CD8-positive, alpha-beta T cell (primary cell): ENCODE measurements at regions of chr6 and their contacts with region 1.

Region 1: GRCh38 chr6:47787620-47788497 is 6.0 kb downstream of the OPN5 start:
- DNase-seq: peak; percentile 6 to 64 (median 42)
- ATAC-seq: peak; percentile 83
- H3K4me3 ChIP-seq: no peak overlapping the region
- H3K4me3 Mint-ChIP-seq: no peak overlapping the region
- H3K27ac ChIP-seq: no peak overlapping the region
- H3K27ac Mint-ChIP-seq: no peak overlapping the region
- H3K4me1 ChIP-seq: peaks cover 3% of the 10 kb centered on the region
- H3K4me1 Mint-ChIP-seq: peaks cover 6% of the 10 kb centered on the region
- H3K27me3 ChIP-seq: peaks cover 0 to 8% of the 10 kb centered on the region in 2 experiments
- H3K27me3 Mint-ChIP-seq: peaks cover 34% of the 10 kb centered on the region
- CTCF ChIP-seq: peak; percentile 91

Region 2: GRCh38 chr6:47680051-47680450 is 107.8 kb before region 1 on chr6:
- CTCF ChIA-PET with region 1: no interaction called
- POLR2A ChIA-PET with region 1: no interaction called
- intact Hi-C with region 1: no loop called
- DNase-seq: no peak
- ATAC-seq: no peak
- H3K4me3 ChIP-seq: no peak overlapping the region
- H3K4me3 Mint-ChIP-seq: no peak overlapping the region
- H3K27ac ChIP-seq: no peak overlapping the region
- H3K27ac Mint-ChIP-seq: no peak overlapping the region
- H3K4me1 ChIP-seq: no peaks in the 10 kb centered on the region
- H3K4me1 Mint-ChIP-seq: no peaks in the 10 kb centered on the region
- H3K27me3 ChIP-seq: no peaks in the 10 kb centered on the region
- H3K27me3 Mint-ChIP-seq: no peaks in the 10 kb centered on the region
- CTCF ChIP-seq: no peak

Region 3: DNA sequence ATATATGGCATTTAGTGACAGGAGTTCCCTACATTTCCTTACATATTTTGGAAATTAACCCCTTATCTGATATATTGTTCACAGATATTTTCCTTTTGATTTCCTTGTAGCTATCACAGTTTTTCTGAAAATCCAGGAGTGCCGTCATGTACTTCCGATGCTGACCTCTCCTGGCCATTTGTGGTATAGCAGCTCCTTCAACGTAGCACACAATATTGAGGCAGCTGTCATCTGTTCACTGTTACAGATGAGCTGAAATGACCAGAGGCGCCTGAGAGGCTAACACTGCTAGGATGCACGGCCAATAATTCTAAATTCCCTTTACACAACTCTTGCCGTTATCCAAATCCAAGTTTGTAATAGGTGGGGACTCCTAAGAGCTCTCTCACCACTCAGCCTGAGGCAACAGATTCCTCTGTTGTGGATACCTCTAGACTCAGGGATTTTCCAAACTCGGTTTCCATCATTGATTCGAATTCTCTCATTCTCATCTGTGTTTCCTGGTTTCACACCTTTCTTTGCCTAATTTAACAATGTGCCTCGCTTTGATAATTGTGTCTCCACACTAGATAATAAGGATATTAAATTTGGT is 1622.2 kb after region 1 on chr6:
- CTCF ChIA-PET with region 1: interaction called, 11 read pairs
- POLR2A ChIA-PET with region 1: interaction called, 3 read pairs
- intact Hi-C with region 1: loop called (anchors 1 kb)
- DNase-seq: peak; percentile 20 to 65 (median 46)
- ATAC-seq: peak; percentile 78
- H3K4me3 ChIP-seq: no peak overlapping the region
- H3K4me3 Mint-ChIP-seq: no peak overlapping the region
- H3K27ac ChIP-seq: no peak overlapping the region
- H3K27ac Mint-ChIP-seq: no peak overlapping the region
- H3K4me1 ChIP-seq: no peaks in the 10 kb centered on the region
- H3K4me1 Mint-ChIP-seq: no peaks in the 10 kb centered on the region
- H3K27me3 ChIP-seq: no peaks in the 10 kb centered on the region
- H3K27me3 Mint-ChIP-seq: peaks cover 17% of the 10 kb centered on the region
- CTCF ChIP-seq: peak; percentile 94